Psoas muscle (tissue), 8 donors: ENCODE measurements at regions of chr6 and their contacts with region 1.

Region 1: GRCh38 chr6:97394160-97394748 is 111.2 kb upstream of the MMS22L start:
- DNase-seq: no peak
- ATAC-seq: peak; percentile 56 to 83 (median 74)
- H3K4me3 ChIP-seq: no peak overlapping the region
- H3K27ac ChIP-seq: no peak overlapping the region
- H3K4me1 ChIP-seq: no peaks in the 10 kb centered on the region
- H3K27me3 ChIP-seq: peaks cover 0 to 3% (median 0%) of the 10 kb centered on the region in 3 donors
- CTCF ChIP-seq: peak; percentile 92

Region 2: DNA sequence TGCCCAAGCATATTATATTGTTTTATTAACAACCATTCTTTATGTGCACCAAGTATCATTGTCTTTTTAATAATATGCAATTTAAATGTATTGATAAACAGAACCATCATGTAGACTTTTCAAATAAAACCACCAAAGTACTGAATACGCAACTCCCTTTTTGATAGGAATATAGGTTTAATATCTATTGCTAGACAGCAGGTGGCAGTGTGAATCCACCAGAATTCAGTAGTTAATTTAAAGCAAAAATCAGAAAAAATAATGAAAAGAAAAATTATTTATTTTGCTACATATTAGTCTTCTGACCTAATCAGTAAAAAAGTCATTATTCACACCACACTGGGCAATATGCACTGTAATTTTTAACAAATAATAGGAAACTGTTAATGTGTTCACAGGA is 326.0 kb before region 1 on chr6:
- intact Hi-C with region 1: loop called (anchors 5 kb)
- DNase-seq: no peak
- ATAC-seq: no peak
- H3K4me3 ChIP-seq: no peak overlapping the region
- H3K27ac ChIP-seq: no peak overlapping the region
- H3K4me1 ChIP-seq: no peaks in the 10 kb centered on the region
- H3K27me3 ChIP-seq: peaks cover 0 to 3% (median 0%) of the 10 kb centered on the region in 3 donors
- CTCF ChIP-seq: peak; percentile 47

Region 3: DNA sequence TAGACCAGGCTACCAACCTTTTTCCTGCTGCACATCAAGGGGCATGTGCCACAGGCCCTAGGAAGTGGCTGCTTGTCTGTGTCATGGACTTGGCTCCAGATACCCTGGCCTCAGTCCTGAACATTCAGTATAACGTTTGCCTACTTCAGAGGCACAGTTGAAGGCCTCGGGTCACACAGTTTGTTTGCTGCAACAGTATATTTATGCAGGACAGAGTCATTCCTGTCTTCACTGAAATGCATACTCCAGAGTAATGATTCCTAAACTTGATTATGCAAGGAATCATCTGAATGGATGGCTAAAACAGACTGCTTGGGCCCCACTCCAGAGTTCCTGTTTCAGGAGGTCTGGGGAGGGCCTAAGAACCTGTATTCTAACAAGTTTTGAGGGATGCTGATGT is 320.4 kb before region 1 on chr6:
- intact Hi-C with region 1: loop called (anchors 5 kb)
- DNase-seq: no peak
- ATAC-seq: no peak
- H3K4me3 ChIP-seq: no peak overlapping the region
- H3K27ac ChIP-seq: no peak overlapping the region
- H3K4me1 ChIP-seq: no peaks in the 10 kb centered on the region
- H3K27me3 ChIP-seq: peaks cover 0 to 3% (median 0%) of the 10 kb centered on the region in 3 donors
- CTCF ChIP-seq: no peak

Region 4: GRCh38 chr6:97186416-97186999 is 207.7 kb before region 1 on chr6:
- intact Hi-C with region 1: loop called (anchors 2 to 5 kb)
- DNase-seq: peak; percentile 21 to 59
- ATAC-seq: peak in 2 of 4 donors; percentile 59 to 77
- H3K4me3 ChIP-seq: no peak overlapping the region
- H3K27ac ChIP-seq: no peak overlapping the region
- H3K4me1 ChIP-seq: no peaks in the 10 kb centered on the region
- H3K27me3 ChIP-seq: no peaks in the 10 kb centered on the region
- CTCF ChIP-seq: peak; percentile 82

Region 5: DNA sequence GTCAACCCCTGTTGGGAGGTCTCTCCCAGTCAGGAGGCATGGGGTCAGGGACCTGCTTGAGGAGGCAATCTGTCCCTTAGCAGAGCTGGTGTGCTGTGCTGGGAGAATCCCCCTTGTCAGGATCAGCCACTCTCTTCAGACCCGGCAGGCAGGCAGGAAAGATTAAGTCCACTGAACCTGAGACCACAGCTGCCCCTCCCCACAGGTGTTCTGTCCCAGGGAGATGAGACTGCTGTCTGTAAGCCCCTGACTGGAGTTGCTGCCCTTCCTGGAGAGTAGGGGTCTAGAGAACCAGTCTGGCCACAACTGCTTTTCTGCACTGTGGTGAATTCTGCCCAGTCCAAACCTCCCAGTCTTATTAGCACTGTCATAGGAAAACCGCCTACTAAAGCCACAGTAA is 762.3 kb after region 1 on chr6:
- intact Hi-C with region 1: no loop called
- DNase-seq: no peak
- ATAC-seq: no peak
- H3K4me3 ChIP-seq: no peak overlapping the region
- H3K27ac ChIP-seq: no peak overlapping the region
- H3K4me1 ChIP-seq: no peaks in the 10 kb centered on the region
- H3K27me3 ChIP-seq: no peaks in the 10 kb centered on the region
- CTCF ChIP-seq: no peak